K562 (cell line): ENCODE measurements at regions of chrX and their contacts with region 1.

Region 1: GRCh38 chrX:76279000-76279399 is 106.1 kb downstream of the PBDC1 start:
- DNase-seq: peak; percentile 7 to 44 (median 11)
- ATAC-seq: peak; percentile 73
- H3K4me3 ChIP-seq: no peak overlapping the region
- H3K27ac ChIP-seq: no peak overlapping the region
- H3K4me1 ChIP-seq: no peaks in the 10 kb centered on the region
- H3K27me3 ChIP-seq: no peaks in the 10 kb centered on the region
- CTCF ChIP-seq: peak; percentile 32 to 64 (median 52); a peak in 5 of 6 replicates
- EP300 ChIP-seq: no peak
- POLR2A ChIP-seq: no peak
- RAD21 ChIP-seq: peak; percentile 47 to 66

Region 2: GRCh38 chrX:76454456-76454927 is 175.5 kb after region 1 on chrX:
- CTCF ChIA-PET with region 1: no interaction called
- POLR2A ChIA-PET with region 1: no interaction called
- in situ Hi-C with region 1: no loop called
- intact Hi-C with region 1: loop called (anchors 10 kb)
- DNase-seq: peak in 3 of 4 experiments; percentile 1 to 4 (median 3)
- ATAC-seq: no peak; the same call in 2 of the 3 replicates
- H3K4me3 ChIP-seq: no peak overlapping the region
- H3K27ac ChIP-seq: no peak overlapping the region
- H3K4me1 ChIP-seq: no peaks in the 10 kb centered on the region
- H3K27me3 ChIP-seq: no peaks in the 10 kb centered on the region
- CTCF ChIP-seq: peak in 2 of 3 experiments; percentile 23 to 36; a peak in 2 of 6 replicates
- EP300 ChIP-seq: no peak
- POLR2A ChIP-seq: no peak
- RAD21 ChIP-seq: peak in 1 of 2 experiments; percentile 31; a peak in 2 of 4 replicates